ENCODE measurements at regions of chr19 and their contacts with region 1.

Region 1: DNA sequence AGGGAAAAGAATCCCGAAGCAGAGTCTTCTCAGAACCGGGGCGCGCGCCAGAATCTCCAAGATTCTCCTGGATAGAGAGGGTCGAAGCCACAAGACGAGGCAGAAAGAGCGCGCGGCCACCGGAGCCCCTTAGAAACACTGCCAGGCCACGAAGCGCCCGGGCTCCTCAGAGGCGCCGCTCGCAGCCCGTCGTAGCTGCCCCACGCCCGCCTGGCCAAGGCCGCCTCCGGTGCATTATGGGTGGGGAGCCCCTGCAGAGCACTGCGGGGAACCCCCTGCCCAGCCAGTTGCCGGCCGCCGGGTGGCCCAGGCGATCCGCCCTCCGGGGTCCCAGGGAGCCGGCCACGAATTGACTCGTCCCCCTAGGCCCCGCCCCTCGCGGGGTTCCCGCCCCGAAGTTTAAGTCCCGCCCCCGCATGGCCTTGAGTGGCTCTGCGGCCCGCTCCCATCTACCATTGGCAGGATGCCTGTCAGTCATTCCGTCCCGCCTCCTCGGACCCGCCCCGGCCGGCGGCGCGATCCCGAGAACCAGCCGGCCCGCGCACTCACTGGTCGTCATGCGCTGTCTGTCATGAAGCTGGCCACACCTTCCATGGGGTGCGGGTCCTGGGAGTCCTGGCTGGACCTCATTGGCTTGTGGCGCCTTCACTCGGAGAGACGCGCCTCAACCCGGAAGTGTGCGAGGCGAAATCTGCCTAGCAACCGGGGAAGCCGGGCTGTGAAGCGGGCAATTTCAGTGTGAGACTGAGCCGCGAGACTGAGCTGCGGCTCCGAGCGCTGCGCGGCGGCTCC is 20.2 kb upstream of the GATAD2A start:
- DNase-seq: peak; percentile 96

Region 2: DNA sequence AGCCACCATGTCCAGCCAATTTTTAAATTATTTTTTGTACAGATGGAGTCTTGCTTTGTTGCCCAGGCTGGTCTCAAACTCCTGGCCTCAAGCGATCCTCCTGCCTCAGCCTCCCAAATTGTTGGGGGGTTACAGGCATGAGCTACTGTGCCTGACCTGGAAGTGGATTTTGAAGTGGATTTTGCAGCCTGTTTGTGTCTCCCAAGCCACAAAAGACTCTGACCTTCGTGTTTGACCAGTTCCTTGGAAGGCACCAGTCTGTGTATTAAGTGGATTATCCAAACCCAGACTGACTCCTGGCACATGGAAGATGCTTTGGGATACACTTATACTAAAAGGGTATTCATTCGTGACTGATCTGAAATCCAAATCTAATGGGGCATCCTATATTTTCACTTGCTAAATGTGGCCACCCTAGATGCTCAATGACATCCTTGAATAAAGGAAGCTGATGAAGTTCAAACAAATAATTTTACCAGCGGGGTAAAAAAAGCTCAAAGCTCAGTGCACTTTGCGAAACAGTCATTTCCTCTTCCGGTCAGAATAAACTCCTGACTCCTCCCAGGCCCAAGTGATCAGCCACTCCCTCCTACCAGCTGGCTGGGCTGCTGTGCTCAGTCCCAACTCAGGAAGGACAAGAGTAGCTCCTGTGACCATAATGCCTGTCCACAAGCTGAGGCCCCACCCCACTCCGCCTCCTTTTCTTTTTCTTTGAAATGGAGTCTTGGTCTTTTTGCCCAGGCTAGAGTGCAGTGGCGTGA is 12.5 kb before region 1 on chr19:
- CTCF ChIA-PET with region 1: interaction called, 3 read pairs
- POLR2A ChIA-PET with region 1: interaction called, 16 read pairs
- DNase-seq: no peak

Region 3: GRCh38 chr19:19434483-19435045 is 49.3 kb after region 1 on chr19:
- CTCF ChIA-PET with region 1: no interaction called
- POLR2A ChIA-PET with region 1: no interaction called
- DNase-seq: no peak